B cell (primary cell): ENCODE measurements at regions of chr16 and their contacts with region 1.

Region 1: GRCh38 chr16:88957887-88958577 is 19.0 kb downstream of the CBFA2T3 start:
- DNase-seq: peak; percentile 49
- ATAC-seq: peak; percentile 61
- H3K4me3 ChIP-seq: peak overlapping the region in 1 of 5 experiments; percentile 5
- H3K4me3 Mint-ChIP-seq: peak overlapping the region; percentile 67
- H3K27ac ChIP-seq: peak overlapping the region in 1 of 2 donors; percentile 37
- H3K27ac Mint-ChIP-seq: peak overlapping the region; percentile 51
- H3K4me1 ChIP-seq: peaks cover 26 to 39% of the 10 kb centered on the region in 2 donors
- H3K4me1 Mint-ChIP-seq: peaks cover 38% of the 10 kb centered on the region
- H3K27me3 ChIP-seq: no peaks in the 10 kb centered on the region
- H3K27me3 Mint-ChIP-seq: no peaks in the 10 kb centered on the region
- CTCF ChIP-seq: no peak

Region 2: DNA sequence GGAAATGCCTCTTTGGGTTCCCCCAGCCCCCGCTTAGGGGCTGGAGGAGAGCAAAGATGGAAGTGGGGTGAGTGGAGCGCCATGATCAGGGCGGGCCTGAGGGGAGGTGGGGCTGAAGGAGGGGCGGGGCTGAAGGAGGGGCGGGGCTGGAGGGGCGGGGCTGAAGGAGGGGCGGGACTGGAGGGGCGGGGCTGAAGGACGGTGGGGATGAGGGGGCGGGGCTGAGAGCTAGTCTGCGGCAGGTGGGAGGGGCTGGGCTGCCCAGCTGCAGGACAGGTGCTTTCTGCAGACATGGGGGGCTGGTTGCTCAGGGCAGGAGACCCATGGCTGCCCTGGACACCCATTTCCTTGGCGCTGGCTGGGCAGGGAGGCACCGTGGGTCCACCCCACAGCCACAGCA is 52.5 kb before region 1 on chr16:
- CTCF ChIA-PET with region 1: no interaction called
- POLR2A ChIA-PET with region 1: no interaction called
- intact Hi-C with region 1: no loop called
- DNase-seq: peak; percentile 49
- ATAC-seq: peak; percentile 70
- H3K4me3 ChIP-seq: no peak overlapping the region
- H3K4me3 Mint-ChIP-seq: no peak overlapping the region
- H3K27ac ChIP-seq: no peak overlapping the region
- H3K27ac Mint-ChIP-seq: no peak overlapping the region
- H3K4me1 ChIP-seq: peaks cover 0 to 13% of the 10 kb centered on the region in 2 donors
- H3K4me1 Mint-ChIP-seq: peaks cover 19% of the 10 kb centered on the region
- H3K27me3 ChIP-seq: no peaks in the 10 kb centered on the region
- H3K27me3 Mint-ChIP-seq: no peaks in the 10 kb centered on the region
- CTCF ChIP-seq: no peak

Region 3: GRCh38 chr16:89060207-89060794 is 102.3 kb after region 1 on chr16:
- CTCF ChIA-PET with region 1: no interaction called
- POLR2A ChIA-PET with region 1: interaction called, 13 read pairs
- intact Hi-C with region 1: no loop called
- DNase-seq: peak; percentile 87
- ATAC-seq: peak; percentile 80
- H3K4me3 ChIP-seq: no peak overlapping the region
- H3K4me3 Mint-ChIP-seq: peak overlapping the region; percentile 63
- H3K27ac ChIP-seq: peak overlapping the region; percentile 51 to 74
- H3K27ac Mint-ChIP-seq: peak overlapping the region; percentile 90
- H3K4me1 ChIP-seq: peaks cover 27 to 56% of the 10 kb centered on the region in 2 donors
- H3K4me1 Mint-ChIP-seq: peaks cover 43% of the 10 kb centered on the region
- H3K27me3 ChIP-seq: peaks cover 0 to 4% (median 0%) of the 10 kb centered on the region in 4 experiments
- H3K27me3 Mint-ChIP-seq: no peaks in the 10 kb centered on the region
- CTCF ChIP-seq: no peak

Region 4: DNA sequence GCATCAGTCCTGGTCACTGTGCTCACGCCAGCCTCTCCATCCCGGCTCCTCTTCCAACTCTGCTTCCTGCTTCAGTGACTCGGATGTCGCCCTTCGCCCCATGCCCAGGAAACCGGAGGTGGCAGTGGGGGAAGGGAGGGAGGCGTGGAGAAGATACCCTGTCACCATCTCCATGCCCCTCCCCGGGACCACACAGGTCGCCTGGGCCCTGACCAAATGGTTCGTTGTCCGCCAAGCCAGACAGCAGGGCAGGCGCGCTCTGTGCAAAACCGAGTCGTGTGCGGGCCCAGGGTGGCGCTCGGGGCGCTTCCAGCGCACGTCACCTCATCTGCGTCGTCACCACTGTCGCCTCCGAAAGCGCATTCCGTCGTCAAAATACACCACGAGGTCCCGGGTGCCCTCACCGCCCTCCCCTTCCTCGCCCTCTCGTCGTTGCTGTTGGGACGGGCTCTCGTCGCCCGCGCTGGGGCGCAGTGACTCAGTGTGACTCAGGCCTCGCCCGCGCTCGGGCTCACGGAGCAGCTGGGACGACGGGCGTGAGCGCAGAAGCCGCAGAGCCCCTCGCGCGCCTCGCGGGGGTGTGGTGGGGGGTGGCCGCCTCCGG is 298.7 kb after region 1 on chr16:
- CTCF ChIA-PET with region 1: no interaction called
- POLR2A ChIA-PET with region 1: no interaction called
- intact Hi-C with region 1: no loop called
- DNase-seq: peak; percentile 59
- ATAC-seq: peak; percentile 77
- H3K4me3 ChIP-seq: peak overlapping the region in 4 of 5 experiments; percentile 12 to 29 (median 16)
- H3K4me3 Mint-ChIP-seq: peak overlapping the region; percentile 59
- H3K27ac ChIP-seq: no peak overlapping the region
- H3K27ac Mint-ChIP-seq: peak overlapping the region; percentile 6
- H3K4me1 ChIP-seq: peaks cover 16 to 19% of the 10 kb centered on the region in 2 donors
- H3K4me1 Mint-ChIP-seq: peaks cover 20% of the 10 kb centered on the region
- H3K27me3 ChIP-seq: peaks cover 0 to 27% (median 16%) of the 10 kb centered on the region in 4 experiments
- H3K27me3 Mint-ChIP-seq: peaks cover 28% of the 10 kb centered on the region
- CTCF ChIP-seq: no peak